Mammary epithelial cell (primary cell): ENCODE measurements at regions of chr2 and their contacts with region 1.

Region 1: GRCh38 chr2:219057709-219058540 is 2.8 kb downstream of the IHH start:
- DNase-seq: peak; percentile 44
- H3K4me3 ChIP-seq: no peak overlapping the region
- H3K27ac ChIP-seq: no peak overlapping the region
- H3K4me1 ChIP-seq: peaks cover 24% of the 10 kb centered on the region
- H3K27me3 ChIP-seq: peaks cover 53% of the 10 kb centered on the region
- CTCF ChIP-seq: peak; percentile 63 to 78

Region 2: GRCh38 chr2:218979846-218980734 is 77.8 kb before region 1 on chr2:
- CTCF ChIA-PET with region 1: no interaction called
- dilution Hi-C with region 1: no loop called
- in situ Hi-C with region 1: no loop called
- intact Hi-C with region 1: loop called (anchors 5 kb)
- DNase-seq: peak; percentile 67
- H3K4me3 ChIP-seq: peak overlapping the region in 1 of 3 experiments; percentile 37
- H3K27ac ChIP-seq: no peak overlapping the region
- H3K4me1 ChIP-seq: peaks cover 15% of the 10 kb centered on the region
- H3K27me3 ChIP-seq: peaks cover 41% of the 10 kb centered on the region
- CTCF ChIP-seq: peak; percentile 79 to 86

Region 3: DNA sequence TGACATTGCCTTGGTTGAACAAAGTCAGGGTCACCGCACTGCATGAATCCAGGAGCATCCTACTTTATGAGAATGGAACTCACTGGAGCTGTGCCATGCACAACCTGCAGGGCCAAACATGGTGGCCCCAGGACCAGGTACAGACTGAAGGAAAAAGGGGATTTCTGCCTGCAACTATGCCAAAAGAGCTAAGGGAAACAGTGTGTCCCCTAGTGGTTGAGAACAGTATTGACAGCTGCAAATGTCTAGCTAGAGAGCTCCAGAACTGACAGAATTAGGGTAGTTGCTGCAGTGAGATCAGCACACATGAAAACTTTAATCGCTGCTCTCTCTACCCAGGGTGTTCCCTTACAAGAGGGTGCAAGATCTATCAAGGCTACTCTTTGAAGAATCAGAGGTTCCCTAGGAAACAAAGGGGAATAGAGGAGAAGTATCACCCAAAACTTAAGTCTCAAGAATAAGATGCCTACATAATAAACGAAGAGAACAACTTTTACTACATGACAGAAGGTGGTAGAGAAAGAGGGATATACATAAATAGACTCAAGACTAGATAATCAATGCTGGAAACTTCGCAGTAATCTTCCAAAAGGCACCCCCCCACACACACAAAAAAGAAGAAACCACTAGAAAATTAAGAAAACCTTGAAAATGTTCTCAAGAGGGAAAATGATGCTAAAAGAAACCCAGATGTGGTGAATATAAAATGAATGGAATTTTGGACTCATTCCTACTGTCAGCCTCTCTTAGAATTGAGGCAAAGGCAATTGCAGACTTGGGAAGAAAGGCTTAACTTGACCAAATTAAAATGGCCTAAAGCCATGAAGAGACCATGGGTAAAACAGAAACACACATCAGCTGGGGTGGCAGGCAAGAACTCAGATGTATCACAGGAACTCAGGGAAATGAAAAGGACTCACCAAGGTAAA is 46.4 kb after region 1 on chr2:
- CTCF ChIA-PET with region 1: interaction called, 3 read pairs
- dilution Hi-C with region 1: loop called (anchors 5 kb)
- in situ Hi-C with region 1: no loop called
- intact Hi-C with region 1: loop called (anchors 1 kb)
- DNase-seq: peak; percentile 52
- H3K4me3 ChIP-seq: no peak overlapping the region
- H3K27ac ChIP-seq: no peak overlapping the region
- H3K4me1 ChIP-seq: no peaks in the 10 kb centered on the region
- H3K27me3 ChIP-seq: no peaks in the 10 kb centered on the region
- CTCF ChIP-seq: peak; percentile 93 to 96

Region 4: DNA sequence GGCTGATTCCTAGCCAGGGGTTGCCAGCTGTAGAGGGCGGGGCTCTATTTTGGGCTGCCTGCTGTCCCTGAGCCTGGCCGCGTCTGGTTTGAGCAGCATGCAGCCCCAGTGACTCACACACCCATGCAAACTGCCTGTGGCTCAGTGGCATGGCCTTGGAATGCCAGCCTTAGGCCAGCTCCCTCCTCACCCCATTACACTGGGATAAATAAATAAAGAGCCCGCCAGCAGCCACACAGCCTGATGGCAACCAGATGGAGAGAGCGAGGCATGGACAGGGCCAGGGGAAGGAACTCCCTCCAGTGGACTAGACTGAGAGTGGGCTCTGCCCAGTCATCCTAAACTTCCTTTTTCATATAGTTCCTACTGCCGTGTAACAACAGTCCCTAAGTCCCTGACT is 84.4 kb after region 1 on chr2:
- CTCF ChIA-PET with region 1: no interaction called
- dilution Hi-C with region 1: loop called (anchors 5 kb)
- in situ Hi-C with region 1: no loop called
- intact Hi-C with region 1: no loop called
- DNase-seq: peak; percentile 77
- H3K4me3 ChIP-seq: no peak overlapping the region
- H3K27ac ChIP-seq: no peak overlapping the region
- H3K4me1 ChIP-seq: peaks cover 11% of the 10 kb centered on the region
- H3K27me3 ChIP-seq: no peaks in the 10 kb centered on the region
- CTCF ChIP-seq: peak in 1 of 2 donors; percentile 12

Region 5: DNA sequence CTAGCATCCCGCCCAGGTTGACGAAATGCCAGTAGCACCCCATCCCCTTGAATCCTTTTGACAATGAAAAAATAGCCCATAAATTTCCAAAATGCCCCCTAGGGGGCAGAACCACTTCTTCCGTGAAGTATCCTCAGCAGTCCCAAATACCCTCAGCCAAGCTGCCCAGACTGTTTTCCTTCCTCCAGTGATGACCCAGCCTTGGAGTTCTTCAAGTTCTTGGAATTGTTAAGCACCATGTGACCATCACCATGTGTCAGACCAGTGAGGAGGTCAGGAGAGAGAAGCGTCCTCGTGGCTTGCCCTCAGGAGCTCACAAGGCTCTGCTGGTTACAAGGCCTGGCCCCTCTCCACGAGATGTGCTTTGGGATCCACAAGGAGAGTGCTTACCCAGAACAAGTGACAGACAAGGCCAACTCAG is 113.3 kb after region 1 on chr2:
- CTCF ChIA-PET with region 1: no interaction called
- dilution Hi-C with region 1: no loop called
- in situ Hi-C with region 1: no loop called
- intact Hi-C with region 1: no loop called
- DNase-seq: peak; percentile 23
- H3K4me3 ChIP-seq: no peak overlapping the region
- H3K27ac ChIP-seq: no peak overlapping the region
- H3K4me1 ChIP-seq: peaks cover 8% of the 10 kb centered on the region
- H3K27me3 ChIP-seq: no peaks in the 10 kb centered on the region
- CTCF ChIP-seq: peak; percentile 61 to 67

Region 6: DNA sequence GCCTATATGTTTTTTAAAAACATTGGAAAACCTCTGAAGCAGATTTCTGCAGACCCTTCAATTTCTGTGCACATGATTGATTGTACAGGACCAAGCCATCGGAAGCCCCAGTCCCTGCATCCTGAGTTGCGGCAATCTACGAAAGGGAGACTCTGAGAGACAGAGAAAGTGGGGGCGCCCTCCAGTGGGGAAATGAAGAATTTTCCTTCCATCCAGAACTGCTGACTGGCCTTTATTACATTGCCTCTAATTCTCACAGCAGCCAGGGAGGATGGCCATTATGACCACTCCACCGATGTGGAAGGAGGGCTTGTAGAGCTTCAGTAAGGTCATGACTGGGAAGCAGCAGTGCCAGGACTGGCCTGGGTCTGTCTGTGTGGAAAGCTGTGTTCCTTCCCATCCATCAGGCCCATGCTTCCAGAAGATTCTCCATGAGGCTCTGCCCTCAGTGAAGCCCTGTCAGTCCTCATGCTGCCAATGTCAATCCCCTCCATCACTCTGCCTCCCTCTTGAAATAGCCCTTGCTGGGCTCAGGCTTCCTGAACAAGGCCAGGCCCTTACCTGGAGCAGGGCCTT is 294.6 kb after region 1 on chr2:
- CTCF ChIA-PET with region 1: no interaction called
- dilution Hi-C with region 1: no loop called
- in situ Hi-C with region 1: no loop called
- intact Hi-C with region 1: loop called (anchors 5 kb)
- DNase-seq: peak; percentile 51
- H3K4me3 ChIP-seq: no peak overlapping the region
- H3K27ac ChIP-seq: no peak overlapping the region
- H3K4me1 ChIP-seq: no peaks in the 10 kb centered on the region
- H3K27me3 ChIP-seq: no peaks in the 10 kb centered on the region
- CTCF ChIP-seq: peak; percentile 73 to 75